ENCODE measurements at regions of chr1 and their contacts with region 1.

Region 1: GRCh38 chr1:156860113-156860627 is 495 bp upstream of the NTRK1 start:
- DNase-seq: peak; percentile 60
- H3K4me3 Mint-ChIP-seq: peak overlapping the region; percentile 57
- H3K27ac Mint-ChIP-seq: no peak overlapping the region
- H3K4me1 Mint-ChIP-seq: peaks cover 18% of the 10 kb centered on the region
- H3K27me3 Mint-ChIP-seq: peaks cover 53% of the 10 kb centered on the region
- CTCF ChIP-seq: peak; percentile 98

Region 2: DNA sequence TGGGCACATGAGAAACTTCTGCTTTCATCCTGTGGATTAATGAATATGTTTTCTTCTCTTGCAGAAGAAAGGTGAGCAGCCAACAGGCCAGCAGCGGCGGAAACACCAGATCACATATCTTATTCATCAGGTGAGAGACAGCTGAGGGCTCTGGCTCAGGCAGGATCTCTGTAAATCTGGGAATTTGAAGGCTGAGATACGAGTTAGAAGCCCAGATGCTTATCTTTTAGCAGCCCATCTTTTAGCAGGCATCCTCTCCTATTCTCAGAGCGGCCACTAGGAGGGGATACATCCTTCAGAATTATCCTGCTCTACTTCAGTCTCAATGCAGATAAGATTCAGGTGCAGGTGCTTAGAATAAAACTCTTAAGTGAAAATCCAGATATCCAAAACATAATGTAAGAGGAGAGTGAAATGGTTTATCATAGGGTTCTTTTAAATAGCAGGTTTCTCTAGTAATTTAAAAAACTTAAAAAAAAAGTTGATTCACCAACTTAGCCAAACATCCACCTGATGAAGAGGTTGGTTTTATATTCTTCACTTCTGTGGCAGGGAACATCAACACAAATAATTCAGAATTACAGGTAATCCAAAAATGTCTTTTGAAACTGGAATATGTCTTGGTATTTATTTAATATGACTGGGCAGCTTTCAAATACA is 62.8 kb before region 1 on chr1:
- CTCF ChIA-PET with region 1: interaction called, 96 read pairs
- POLR2A ChIA-PET with region 1: no interaction called
- intact Hi-C with region 1: loop called (anchors 1 kb)
- DNase-seq: peak; percentile 82
- H3K4me3 Mint-ChIP-seq: no peak overlapping the region
- H3K27ac Mint-ChIP-seq: no peak overlapping the region
- H3K4me1 Mint-ChIP-seq: no peaks in the 10 kb centered on the region
- H3K27me3 Mint-ChIP-seq: no peaks in the 10 kb centered on the region
- CTCF ChIP-seq: peak; percentile 93

Region 3: DNA sequence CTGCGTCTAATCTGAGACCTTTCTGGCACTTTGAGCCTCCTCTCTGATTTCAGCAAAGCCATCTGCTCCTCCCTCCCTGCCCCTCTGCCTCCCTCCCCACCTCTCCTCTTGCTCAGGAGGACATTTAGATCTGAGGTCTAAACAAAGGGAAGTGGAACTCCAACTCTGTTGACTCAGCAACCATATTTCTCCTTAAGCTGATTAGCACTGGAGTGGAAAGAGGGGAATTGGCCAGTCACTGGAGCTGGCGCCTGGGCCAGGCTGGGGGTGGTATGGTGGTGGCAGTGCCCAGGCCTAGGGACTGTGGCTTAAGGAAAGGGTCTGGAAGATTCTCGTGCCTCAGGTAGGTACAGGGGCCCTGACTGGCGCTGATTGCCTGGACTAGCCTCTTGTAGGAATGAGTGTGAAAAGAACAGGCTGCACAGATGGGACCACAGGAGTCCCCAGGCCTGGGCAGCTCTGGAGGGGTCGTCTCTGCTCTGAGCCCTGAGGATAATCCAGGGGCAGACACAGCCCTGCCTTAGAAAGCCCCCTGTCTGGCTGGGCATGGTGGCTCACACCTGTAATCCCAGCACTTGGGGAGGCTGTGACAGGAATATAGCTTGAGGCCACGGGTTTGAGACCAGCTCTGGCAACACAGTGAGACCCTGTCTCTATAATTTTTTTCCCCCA is 55.5 kb before region 1 on chr1:
- CTCF ChIA-PET with region 1: interaction called, 96 read pairs
- POLR2A ChIA-PET with region 1: no interaction called
- intact Hi-C with region 1: no loop called
- DNase-seq: no peak
- H3K4me3 Mint-ChIP-seq: no peak overlapping the region
- H3K27ac Mint-ChIP-seq: no peak overlapping the region
- H3K4me1 Mint-ChIP-seq: peaks cover 12% of the 10 kb centered on the region
- H3K27me3 Mint-ChIP-seq: no peaks in the 10 kb centered on the region
- CTCF ChIP-seq: no peak

Region 4: DNA sequence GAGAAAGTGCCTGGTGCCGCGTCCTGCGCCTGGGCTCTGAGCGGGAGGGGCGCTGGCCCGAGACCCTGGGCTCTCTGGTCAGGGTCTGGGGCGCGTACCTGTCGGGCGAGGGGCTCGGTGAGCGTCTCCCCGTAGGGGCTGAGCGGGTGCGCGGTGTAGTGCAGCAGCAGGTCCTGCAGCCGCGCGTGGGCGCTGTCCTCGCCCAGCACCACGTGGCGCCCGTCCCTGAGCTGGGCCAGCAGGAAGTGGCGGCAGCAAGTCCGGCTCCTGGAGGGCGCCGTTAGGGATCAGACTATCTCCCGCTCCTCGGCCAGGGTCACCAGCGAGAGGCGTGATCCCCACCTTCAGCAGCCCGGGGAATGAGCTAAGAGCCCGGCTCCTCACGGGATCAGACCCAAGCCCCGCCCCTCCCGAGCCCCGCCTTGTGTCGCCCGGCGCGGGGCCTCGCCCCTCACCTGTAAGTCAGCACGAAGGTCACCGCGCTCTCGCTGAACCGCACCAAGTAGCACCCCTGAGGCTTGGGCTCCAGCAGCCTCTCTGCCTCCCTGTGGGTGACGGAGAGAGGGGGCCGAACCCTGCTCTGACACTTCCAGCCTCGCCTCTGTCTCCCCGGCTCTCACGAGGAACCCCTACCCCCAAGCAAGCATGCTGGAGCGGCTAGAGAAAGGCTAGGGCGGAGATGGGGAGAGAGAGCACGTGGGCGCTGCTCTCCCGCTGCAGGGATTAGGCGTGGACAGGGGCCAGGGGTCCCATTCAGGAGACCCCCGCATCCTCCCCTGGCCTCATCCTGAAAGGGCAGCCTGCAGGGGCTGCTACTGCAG is 46.2 kb before region 1 on chr1:
- CTCF ChIA-PET with region 1: interaction called, 21 read pairs
- POLR2A ChIA-PET with region 1: no interaction called
- intact Hi-C with region 1: no loop called
- DNase-seq: peak; percentile 65
- H3K4me3 Mint-ChIP-seq: peak overlapping the region; percentile 73
- H3K27ac Mint-ChIP-seq: peak overlapping the region; percentile 27
- H3K4me1 Mint-ChIP-seq: peaks cover 48% of the 10 kb centered on the region
- H3K27me3 Mint-ChIP-seq: no peaks in the 10 kb centered on the region
- CTCF ChIP-seq: peak; percentile 55

Region 5: DNA sequence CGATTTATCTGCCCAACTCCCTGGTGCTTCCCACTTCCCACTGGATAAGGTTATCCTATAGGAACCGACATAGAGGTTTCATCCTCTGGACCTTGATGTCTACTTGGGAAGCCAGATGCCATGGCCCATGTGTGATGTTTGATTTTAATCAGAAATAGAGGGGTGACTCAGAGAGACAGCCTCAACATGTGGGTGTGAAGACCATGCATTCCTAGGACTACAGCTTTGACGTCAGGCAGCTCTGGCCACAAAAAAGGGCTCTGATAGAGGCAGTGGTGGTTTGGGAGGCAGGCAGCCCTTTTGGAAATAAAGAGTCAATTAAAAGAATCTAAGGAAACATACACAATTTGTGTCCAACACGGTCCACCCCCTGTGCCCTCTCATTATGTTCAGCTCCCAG is 38.4 kb before region 1 on chr1:
- CTCF ChIA-PET with region 1: interaction called, 13 read pairs
- POLR2A ChIA-PET with region 1: no interaction called
- intact Hi-C with region 1: no loop called
- DNase-seq: peak; percentile 41
- H3K4me3 Mint-ChIP-seq: no peak overlapping the region
- H3K27ac Mint-ChIP-seq: no peak overlapping the region
- H3K4me1 Mint-ChIP-seq: peaks cover 18% of the 10 kb centered on the region
- H3K27me3 Mint-ChIP-seq: no peaks in the 10 kb centered on the region
- CTCF ChIP-seq: no peak

Region 6: DNA sequence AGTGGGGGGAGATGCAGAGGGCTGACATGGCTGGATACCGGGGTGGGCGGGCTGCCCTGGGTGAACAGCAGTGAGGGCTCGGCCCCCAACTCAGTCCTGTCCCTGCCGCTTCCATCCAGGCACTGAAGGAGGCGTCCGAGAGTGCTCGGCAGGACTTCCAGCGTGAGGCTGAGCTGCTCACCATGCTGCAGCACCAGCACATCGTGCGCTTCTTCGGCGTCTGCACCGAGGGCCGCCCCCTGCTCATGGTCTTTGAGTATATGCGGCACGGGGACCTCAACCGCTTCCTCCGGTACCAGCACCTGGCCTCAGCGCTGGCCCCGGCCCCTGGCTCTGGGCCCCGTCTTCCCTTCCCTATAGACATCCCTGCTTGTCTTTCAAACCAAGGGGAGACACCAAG is 16.1 kb after region 1 on chr1:
- CTCF ChIA-PET with region 1: interaction called, 39 read pairs
- POLR2A ChIA-PET with region 1: no interaction called
- intact Hi-C with region 1: no loop called
- DNase-seq: no peak
- H3K4me3 Mint-ChIP-seq: no peak overlapping the region
- H3K27ac Mint-ChIP-seq: no peak overlapping the region
- H3K4me1 Mint-ChIP-seq: no peaks in the 10 kb centered on the region
- H3K27me3 Mint-ChIP-seq: peaks cover 38% of the 10 kb centered on the region
- CTCF ChIP-seq: no peak

Region 7: GRCh38 chr1:156927215-156928042 is 67.3 kb after region 1 on chr1:
- CTCF ChIA-PET with region 1: interaction called, 21 read pairs
- POLR2A ChIA-PET with region 1: interaction called, 3 read pairs
- intact Hi-C with region 1: no loop called
- DNase-seq: peak; percentile 91
- H3K4me3 Mint-ChIP-seq: peak overlapping the region; percentile 41
- H3K27ac Mint-ChIP-seq: no peak overlapping the region
- H3K4me1 Mint-ChIP-seq: peaks cover 33% of the 10 kb centered on the region
- H3K27me3 Mint-ChIP-seq: peaks cover 58% of the 10 kb centered on the region
- CTCF ChIP-seq: peak; percentile 97

Measured in MCF 10A (cell line).